ENCODE measurements at regions of chr20 and their contacts with region 1.

Region 1: DNA sequence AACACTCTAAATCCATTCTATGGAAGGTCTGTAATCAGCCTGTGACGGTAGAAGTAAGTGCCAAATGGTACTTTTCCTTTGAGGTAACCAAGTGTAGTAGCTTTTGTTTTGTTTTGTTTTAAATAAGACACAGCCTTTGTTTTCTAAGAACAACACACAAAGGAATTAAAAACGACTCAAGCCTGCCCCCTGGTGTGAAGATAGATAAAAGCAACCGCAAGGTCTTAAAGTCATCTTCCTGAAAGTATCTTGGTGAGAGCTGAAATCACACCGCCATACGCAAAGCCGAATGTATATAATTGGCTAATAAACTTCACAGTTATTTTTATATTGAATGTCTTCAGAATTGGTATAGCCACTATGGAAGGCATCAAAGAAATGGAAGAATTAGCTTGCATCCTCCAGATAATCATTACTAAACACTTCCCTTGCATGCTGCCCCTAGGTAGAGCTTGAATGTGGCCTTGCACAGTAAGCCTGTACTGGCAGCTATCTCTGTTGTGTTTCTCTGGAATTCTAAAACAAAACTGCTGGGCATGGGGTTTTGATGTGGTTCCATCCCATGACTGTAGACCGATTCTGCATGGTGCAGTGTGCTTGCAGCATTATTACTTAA is 95.6 kb downstream of the LAMP5 start:
- DNase-seq: peak; percentile 3 to 47 (median 39)
- ATAC-seq: peak; percentile 49; the same call in 1 of the 3 replicates
- H3K4me3 ChIP-seq: no peak overlapping the region
- H3K27ac ChIP-seq: no peak overlapping the region
- H3K4me1 ChIP-seq: no peaks in the 10 kb centered on the region
- H3K27me3 ChIP-seq: no peaks in the 10 kb centered on the region
- CTCF ChIP-seq: peak; percentile 26 to 48 (median 41); a peak in 4 of 6 replicates
- EP300 ChIP-seq: no peak
- POLR2A ChIP-seq: no peak
- RAD21 ChIP-seq: peak; percentile 52 to 68

Region 2: DNA sequence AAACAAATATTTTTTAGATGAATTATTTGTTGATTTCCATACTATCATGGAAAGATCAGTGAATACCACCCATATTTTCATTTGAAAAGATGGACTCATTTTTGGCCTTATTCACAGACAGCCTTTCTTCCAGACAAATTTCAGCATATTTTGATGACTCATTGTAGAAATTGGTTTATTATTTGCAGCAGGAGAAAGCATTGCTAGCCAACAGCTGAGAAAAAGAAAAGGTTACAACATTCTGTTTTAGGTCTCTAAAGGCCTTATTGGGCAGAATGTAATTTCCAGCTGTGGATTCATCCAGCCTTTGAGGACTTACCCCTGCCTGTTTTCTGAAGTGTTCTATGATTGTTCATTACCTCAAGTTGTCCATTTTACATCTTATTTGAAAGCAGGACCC is 339.2 kb before region 1 on chr20:
- CTCF ChIA-PET with region 1: no interaction called
- POLR2A ChIA-PET with region 1: no interaction called
- in situ Hi-C with region 1: no loop called
- intact Hi-C with region 1: no loop called
- DNase-seq: no peak
- ATAC-seq: no peak
- H3K4me3 ChIP-seq: no peak overlapping the region
- H3K27ac ChIP-seq: no peak overlapping the region
- H3K4me1 ChIP-seq: no peaks in the 10 kb centered on the region
- H3K27me3 ChIP-seq: no peaks in the 10 kb centered on the region
- CTCF ChIP-seq: no peak
- EP300 ChIP-seq: no peak
- POLR2A ChIP-seq: no peak
- RAD21 ChIP-seq: no peak

Region 3: DNA sequence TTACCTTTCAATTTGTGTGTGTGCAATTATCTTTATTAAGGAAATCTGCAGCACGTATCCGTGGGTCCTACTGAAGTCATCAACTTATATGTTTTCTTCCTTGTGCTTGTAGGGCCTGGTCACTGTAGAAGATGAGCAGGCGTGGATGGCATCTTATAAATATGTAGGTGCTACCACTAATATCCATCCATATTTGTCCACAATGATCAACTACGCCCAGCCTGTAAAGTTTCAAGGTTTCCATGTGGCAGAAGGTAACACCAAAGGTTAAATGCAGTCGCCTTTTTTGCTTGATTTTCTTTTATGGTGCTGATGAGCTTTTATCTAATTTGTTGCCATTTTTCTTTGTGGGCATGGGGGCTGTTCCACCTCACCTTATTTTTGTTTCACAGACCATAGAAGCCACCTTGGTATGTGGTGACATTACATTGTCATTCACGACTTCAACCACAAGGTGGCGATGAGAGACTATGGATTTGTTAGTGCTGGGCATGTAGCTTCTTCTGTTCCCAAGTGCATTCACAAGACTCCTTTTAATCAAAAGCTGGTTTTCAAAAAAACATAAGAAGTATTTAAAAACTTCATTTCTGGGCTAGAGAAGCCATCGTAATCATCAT is 202.1 kb before region 1 on chr20:
- CTCF ChIA-PET with region 1: interaction called, 14 read pairs
- POLR2A ChIA-PET with region 1: interaction called, 3 read pairs
- in situ Hi-C with region 1: loop called (anchors 5 kb)
- intact Hi-C with region 1: loop called (anchors 1 kb)
- DNase-seq: peak; percentile 39 to 59 (median 51)
- ATAC-seq: peak; percentile 88
- H3K4me3 ChIP-seq: no peak overlapping the region
- H3K27ac ChIP-seq: no peak overlapping the region
- H3K4me1 ChIP-seq: no peaks in the 10 kb centered on the region
- H3K27me3 ChIP-seq: no peaks in the 10 kb centered on the region
- CTCF ChIP-seq: peak; percentile 57 to 71 (median 57); a peak in 5 of 6 replicates
- EP300 ChIP-seq: no peak
- POLR2A ChIP-seq: no peak
- RAD21 ChIP-seq: peak; percentile 66 to 73

Region 4: GRCh38 chr20:9467995-9468394 is 142.0 kb before region 1 on chr20:
- CTCF ChIA-PET with region 1: no interaction called
- POLR2A ChIA-PET with region 1: no interaction called
- in situ Hi-C with region 1: no loop called
- intact Hi-C with region 1: loop called (anchors 5 kb)
- DNase-seq: peak; percentile 2 to 8 (median 6)
- ATAC-seq: no peak
- H3K4me3 ChIP-seq: no peak overlapping the region
- H3K27ac ChIP-seq: no peak overlapping the region
- H3K4me1 ChIP-seq: no peaks in the 10 kb centered on the region
- H3K27me3 ChIP-seq: no peaks in the 10 kb centered on the region
- CTCF ChIP-seq: peak; percentile 23 to 35 (median 33); a peak in 2 of 6 replicates
- EP300 ChIP-seq: no peak
- POLR2A ChIP-seq: no peak
- RAD21 ChIP-seq: no peak; a peak in 1 of 4 replicates

Measured in K562 (cell line).